A549 (cell line): ENCODE measurements at regions of chr19 and their contacts with region 1.

Region 1: DNA sequence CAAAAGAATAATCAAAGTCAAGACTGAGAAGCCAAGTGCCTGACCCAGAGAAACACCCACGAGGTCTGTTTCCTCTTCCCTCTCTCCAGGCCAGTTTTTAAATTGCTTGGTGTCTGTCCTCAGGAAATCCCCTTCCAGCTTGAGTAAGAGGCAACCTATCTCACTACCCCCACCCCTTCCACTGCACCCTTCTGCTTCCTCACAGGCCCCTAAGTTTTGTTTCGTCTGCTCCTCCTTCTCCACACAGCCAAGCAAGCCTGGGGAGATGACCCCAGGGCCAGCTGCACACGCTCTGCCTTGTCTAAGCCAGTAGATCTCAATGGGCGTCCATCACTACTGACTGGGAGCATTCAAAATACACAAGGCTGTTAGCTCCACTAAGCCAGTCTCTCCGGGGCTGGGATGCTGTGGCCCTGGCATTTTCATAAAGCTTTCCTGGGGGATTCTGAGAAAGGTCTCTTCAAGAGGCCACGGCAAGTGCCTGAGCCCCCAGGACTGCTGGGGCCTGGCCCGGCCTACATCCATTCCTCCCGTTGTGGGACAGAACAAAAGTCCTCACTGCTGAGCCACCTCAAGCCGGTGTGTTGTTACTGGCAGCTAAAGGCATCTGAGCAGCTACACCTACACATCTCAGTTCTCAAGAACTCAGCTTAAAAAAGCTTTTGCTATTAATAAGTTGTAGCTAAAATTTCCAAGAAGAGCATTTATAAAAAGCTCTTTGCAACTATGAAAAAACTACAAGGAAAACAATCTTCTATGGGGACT is 14.9 kb upstream of the IL4I1 start:
- DNase-seq: no peak
- ATAC-seq: no peak
- H3K4me3 ChIP-seq: no peak overlapping the region
- H3K27ac ChIP-seq: 0 out of 6 replicates have a peak overlapping the region, but pooled peaks of 1 of the 2 experiments have one; percentile 2
- H3K4me1 ChIP-seq: no peaks in the 10 kb centered on the region
- CTCF ChIP-seq: no peak
- EP300 ChIP-seq: no peak
- POLR2A ChIP-seq: no peak
- RAD21 ChIP-seq: no peak

Region 2: DNA sequence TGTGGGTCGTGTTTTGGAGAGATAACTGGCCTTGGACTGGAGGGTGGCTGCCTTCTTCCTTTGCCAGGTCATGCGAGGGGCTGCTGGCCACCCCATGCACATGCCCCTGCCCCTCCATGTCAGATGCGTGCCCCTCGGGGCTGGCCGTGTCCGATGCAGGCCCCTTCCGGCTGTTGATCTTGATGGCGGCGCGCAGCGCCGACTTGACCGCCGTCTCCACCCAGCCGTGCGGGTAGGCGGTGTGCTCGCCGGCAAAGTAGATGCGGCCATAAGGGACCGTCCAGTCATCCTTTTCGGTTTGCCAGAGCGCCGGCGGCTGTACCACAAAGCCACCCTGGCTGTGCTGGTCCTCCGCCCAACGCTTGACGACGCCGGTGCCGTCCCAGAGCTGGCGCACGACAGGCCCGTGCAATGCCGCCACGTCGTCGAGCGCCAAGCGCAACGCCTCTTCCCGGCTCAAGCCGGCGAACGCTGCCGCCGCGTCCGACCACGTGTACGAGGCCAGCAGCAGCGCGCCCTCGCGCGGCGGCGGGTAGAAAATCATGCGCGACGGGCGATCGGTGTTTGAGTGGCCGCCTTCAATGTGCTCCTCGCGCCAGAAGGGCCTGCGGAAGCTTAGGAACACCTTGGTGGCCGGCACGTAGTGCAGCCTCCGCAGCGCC is 21.7 kb before region 1 on chr19:
- CTCF ChIA-PET with region 1: interaction called, 20 read pairs
- POLR2A ChIA-PET with region 1: no interaction called
- DNase-seq: peak; percentile 61 to 94
- ATAC-seq: peak; percentile 55 to 79
- H3K4me3 ChIP-seq: peak overlapping the region; percentile 44
- H3K27ac ChIP-seq: peak overlapping the region; percentile 26 to 72; a peak in 5 of 6 replicates
- H3K4me1 ChIP-seq: peaks cover 6% of the 10 kb centered on the region; the same call in 1 of the 3 replicates
- CTCF ChIP-seq: peak; percentile 88
- EP300 ChIP-seq: no peak
- POLR2A ChIP-seq: no peak
- RAD21 ChIP-seq: peak; percentile 42 to 51; a peak in 3 of 5 replicates

Region 3: DNA sequence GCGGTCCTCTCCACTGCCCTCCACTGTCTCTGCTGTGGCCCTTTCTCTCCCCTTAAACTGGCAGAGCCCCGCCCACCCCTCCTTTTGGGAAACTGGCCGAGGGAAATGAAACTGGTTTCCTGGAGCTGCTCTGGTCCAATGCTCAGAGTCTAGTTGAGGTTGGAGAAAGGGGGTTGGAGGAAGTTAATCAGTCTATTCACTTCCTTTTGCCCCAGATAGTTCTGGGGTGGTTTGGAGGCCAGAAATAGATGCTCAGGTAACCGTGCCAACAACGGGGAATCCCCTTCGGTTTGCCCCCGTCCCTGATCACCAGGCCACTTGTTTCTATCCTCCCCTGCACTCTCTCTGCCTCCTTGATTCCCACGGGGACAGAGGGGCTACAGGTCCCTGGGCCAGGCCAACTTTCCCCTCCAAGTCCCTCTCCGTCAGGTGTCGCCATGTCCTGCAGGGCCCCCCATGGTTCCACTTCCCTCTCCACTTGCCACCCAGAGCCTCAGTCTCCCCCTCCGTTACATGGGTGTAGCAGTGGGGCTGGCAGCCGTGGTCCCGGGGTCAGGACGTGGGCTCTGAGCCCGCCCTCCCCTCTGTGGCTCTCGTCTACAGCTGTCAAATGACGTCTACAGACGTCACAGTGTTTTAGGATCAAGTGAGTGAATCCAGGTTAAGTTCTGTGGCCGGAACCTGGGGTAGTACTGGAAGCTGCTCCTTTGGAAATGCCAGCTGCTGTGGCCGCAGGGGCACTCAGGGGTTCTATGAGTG is 14.5 kb before region 1 on chr19 and contains the start of gene IL4I1:
- CTCF ChIA-PET with region 1: interaction called, 13 read pairs
- POLR2A ChIA-PET with region 1: no interaction called
- DNase-seq: no peak
- ATAC-seq: peak; percentile 3 to 29; a peak in 4 of 6 replicates
- H3K4me3 ChIP-seq: no peak within 1 kb of the TSS
- H3K27ac ChIP-seq: peak within 1 kb of the TSS in 1 of 2 experiments; percentile 44; a peak in 3 of 6 replicates
- H3K4me1 ChIP-seq: peaks cover 12% of the 10 kb centered on the region; the same call in 2 of the 3 replicates
- CTCF ChIP-seq: no peak
- EP300 ChIP-seq: no peak
- POLR2A ChIP-seq: no peak
- RAD21 ChIP-seq: no peak
- polyA plus RNA-seq, gene IL4I1: 0.15 and 0.18 TPM in 2 replicates

Region 4: GRCh38 chr19:50401605-50402450 is 490.3 kb after region 1 on chr19:
- CTCF ChIA-PET with region 1: no interaction called
- POLR2A ChIA-PET with region 1: no interaction called
- DNase-seq: no peak
- ATAC-seq: no peak
- H3K4me3 ChIP-seq: no peak overlapping the region
- H3K27ac ChIP-seq: no peak overlapping the region
- H3K4me1 ChIP-seq: no peaks in the 10 kb centered on the region
- CTCF ChIP-seq: no peak
- EP300 ChIP-seq: no peak
- POLR2A ChIP-seq: no peak
- RAD21 ChIP-seq: no peak